Common myeloid progenitor, CD34-positive (primary cell): ENCODE measurements at regions of chr15 and their contacts with region 1.

Region 1: GRCh38 chr15:66497502-66498455 is at the start of gene SNAPC5:
- DNase-seq: peak; percentile 97 to 98 (median 98)
- H3K4me3 ChIP-seq: peak within 1 kb of the TSS; percentile 74 to 99 (median 87)
- H3K27ac ChIP-seq: peak within 1 kb of the TSS; percentile 87 to 91
- H3K4me1 ChIP-seq: peaks cover 2 to 30% (median 19%) of the 10 kb centered on the region in 4 experiments
- H3K27me3 ChIP-seq: no peaks in the 10 kb centered on the region

Region 2: DNA sequence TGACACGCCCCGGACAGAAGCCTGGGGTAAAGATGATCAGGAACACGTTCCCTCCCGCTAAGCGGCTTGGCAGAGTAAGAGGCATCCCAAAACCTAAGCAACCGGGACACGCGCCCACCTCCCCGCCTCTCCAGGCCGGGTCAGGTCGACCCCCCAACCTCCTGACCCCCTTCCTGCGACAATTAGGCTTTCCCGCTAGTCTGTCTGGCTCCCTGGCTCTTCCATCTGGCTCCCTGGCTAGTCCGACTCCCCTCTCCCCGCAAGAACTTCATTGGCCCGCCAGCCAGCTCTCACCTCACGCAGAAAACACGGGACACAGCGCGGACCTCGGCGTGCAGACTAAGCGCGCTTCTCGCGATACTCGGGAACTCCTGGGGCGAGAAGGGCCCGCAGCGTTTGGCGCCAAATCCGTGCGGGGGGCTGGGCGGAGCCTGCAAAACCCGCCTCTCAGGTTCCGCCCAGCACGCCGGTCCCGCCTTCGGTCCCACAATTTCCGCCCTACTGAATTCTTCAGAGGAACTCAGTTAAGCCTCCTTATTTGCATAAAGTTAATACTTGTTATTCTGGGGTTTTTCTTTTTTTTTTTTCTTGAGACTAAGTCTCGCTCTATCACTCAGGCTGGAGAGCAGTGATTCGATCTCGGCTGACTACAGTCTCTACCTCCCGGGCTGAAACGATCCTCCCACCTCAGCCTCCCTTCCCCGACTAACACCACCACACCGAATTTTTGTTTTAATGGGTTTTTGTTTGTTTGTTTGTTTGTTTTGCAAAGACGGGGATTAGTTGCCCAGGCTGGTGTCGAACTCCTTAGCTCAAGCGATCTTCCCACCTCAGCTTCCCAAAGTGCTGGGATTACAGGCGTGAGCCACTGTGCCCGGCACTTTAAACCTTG is 141.2 kb before region 1 on chr15 and contains the start of gene TIPIN:
- CTCF ChIA-PET with region 1: interaction called, 19 read pairs
- POLR2A ChIA-PET with region 1: interaction called, 4 read pairs
- DNase-seq: peak; percentile 98 to 99 (median 98)
- H3K4me3 ChIP-seq: peak within 1 kb of the TSS; percentile 67 to 94 (median 87)
- H3K27ac ChIP-seq: peak within 1 kb of the TSS; percentile 54 to 82
- H3K4me1 ChIP-seq: peaks cover 4 to 20% (median 15%) of the 10 kb centered on the region in 4 experiments
- H3K27me3 ChIP-seq: no peaks in the 10 kb centered on the region

Region 3: GRCh38 chr15:66386204-66387123 is 111.3 kb before region 1 on chr15 and contains the start of gene MAP2K1:
- CTCF ChIA-PET with region 1: interaction called, 42 read pairs
- POLR2A ChIA-PET with region 1: interaction called, 7 read pairs
- DNase-seq: peak; percentile 97 to 98 (median 98)
- H3K4me3 ChIP-seq: peak within 1 kb of the TSS; percentile 59 to 90 (median 88)
- H3K27ac ChIP-seq: peak within 1 kb of the TSS; percentile 59 to 84
- H3K4me1 ChIP-seq: peaks cover 19 to 46% (median 31%) of the 10 kb centered on the region in 4 experiments
- H3K27me3 ChIP-seq: no peaks in the 10 kb centered on the region

Region 4: GRCh38 chr15:66401130-66402021 is 96.4 kb before region 1 on chr15:
- CTCF ChIA-PET with region 1: interaction called, 17 read pairs
- POLR2A ChIA-PET with region 1: no interaction called
- DNase-seq: peak in 2 of 3 donors; percentile 16 to 31
- H3K4me3 ChIP-seq: peak overlapping the region in 2 of 7 experiments; percentile 47 to 48
- H3K27ac ChIP-seq: no peak overlapping the region
- H3K4me1 ChIP-seq: peaks cover 18 to 66% (median 29%) of the 10 kb centered on the region in 4 experiments
- H3K27me3 ChIP-seq: no peaks in the 10 kb centered on the region

Region 5: DNA sequence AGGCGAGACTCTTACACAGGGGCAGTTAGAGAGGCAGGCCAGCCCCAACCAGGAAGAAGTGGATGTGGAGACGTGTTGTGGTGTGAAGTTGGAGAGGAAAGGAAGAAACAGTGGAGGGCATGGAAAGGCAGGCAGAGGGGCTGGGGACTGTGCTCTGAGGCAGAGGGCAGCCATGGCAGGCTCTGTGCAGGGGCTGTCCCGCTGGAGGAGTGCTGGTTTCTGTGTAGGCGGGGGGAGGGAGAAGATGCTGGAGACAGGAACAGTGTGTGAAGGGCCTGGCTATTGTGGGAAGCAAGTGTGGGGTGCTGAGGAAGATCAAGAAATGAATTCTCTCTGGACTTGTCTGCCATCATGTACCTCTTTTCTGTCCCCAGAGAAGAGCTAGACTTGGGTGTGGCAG is 21.2 kb before region 1 on chr15:
- CTCF ChIA-PET with region 1: interaction called, 14 read pairs
- POLR2A ChIA-PET with region 1: no interaction called
- DNase-seq: no peak
- H3K4me3 ChIP-seq: no peak overlapping the region
- H3K27ac ChIP-seq: no peak overlapping the region
- H3K4me1 ChIP-seq: peaks cover 0 to 7% (median 1%) of the 10 kb centered on the region in 4 experiments
- H3K27me3 ChIP-seq: no peaks in the 10 kb centered on the region

Region 6: DNA sequence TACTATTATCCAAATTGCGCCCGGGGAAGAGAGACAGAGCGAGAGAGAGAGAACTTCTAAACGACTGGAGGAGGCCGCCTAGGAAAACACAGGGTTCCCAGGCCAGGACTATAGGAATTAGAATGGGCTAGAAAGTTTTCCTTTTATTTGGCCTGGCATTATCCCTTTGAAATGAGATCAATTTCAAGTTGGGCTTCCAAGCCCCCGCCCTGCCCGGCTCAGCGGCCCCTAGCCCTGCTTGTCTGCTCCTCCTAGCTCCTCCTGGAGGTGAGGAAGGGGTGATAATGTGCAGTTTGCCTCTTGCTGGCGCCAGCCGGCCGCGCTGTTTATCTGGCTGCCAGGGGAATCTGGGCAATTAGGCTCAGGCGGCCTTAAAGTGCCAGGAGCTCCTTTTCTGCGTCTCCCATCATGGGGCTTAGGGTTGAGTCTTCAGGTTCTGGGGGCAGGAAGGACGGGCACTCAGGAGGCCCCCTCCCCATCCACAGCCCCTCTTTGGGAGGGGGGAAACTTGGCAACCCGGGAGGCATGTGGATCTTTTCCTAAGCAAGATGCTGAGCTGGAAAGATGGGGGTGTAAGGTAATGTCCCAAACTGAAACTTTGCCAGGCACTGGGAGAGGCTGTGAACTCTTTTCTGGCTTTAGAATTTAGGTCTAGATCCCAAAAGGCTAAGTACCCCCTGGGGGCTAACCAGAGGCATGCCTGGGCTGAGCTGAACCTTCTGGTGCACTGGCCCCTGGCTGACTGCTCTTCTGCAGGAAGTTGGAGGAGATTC is 209.7 kb after region 1 on chr15:
- CTCF ChIA-PET with region 1: no interaction called
- POLR2A ChIA-PET with region 1: no interaction called
- DNase-seq: peak in 2 of 3 donors; percentile 22 to 40
- H3K4me3 ChIP-seq: no peak overlapping the region
- H3K27ac ChIP-seq: no peak overlapping the region
- H3K4me1 ChIP-seq: peaks cover 1 to 31% (median 21%) of the 10 kb centered on the region in 4 experiments
- H3K27me3 ChIP-seq: peaks cover 0 to 31% (median 3%) of the 10 kb centered on the region in 5 experiments